ENCODE measurements at regions of chr10 and their contacts with region 1.

Region 1: GRCh38 chr10:44932517-44933450 is 21.6 kb downstream of the TMEM72 start:
- DNase-seq: peak; percentile 84
- ATAC-seq: peak; percentile 97
- H3K4me3 Mint-ChIP-seq: no peak overlapping the region
- H3K27ac Mint-ChIP-seq: no peak overlapping the region
- H3K4me1 Mint-ChIP-seq: no peaks in the 10 kb centered on the region
- H3K27me3 Mint-ChIP-seq: no peaks in the 10 kb centered on the region
- CTCF ChIP-seq: peak; percentile 63

Region 2: DNA sequence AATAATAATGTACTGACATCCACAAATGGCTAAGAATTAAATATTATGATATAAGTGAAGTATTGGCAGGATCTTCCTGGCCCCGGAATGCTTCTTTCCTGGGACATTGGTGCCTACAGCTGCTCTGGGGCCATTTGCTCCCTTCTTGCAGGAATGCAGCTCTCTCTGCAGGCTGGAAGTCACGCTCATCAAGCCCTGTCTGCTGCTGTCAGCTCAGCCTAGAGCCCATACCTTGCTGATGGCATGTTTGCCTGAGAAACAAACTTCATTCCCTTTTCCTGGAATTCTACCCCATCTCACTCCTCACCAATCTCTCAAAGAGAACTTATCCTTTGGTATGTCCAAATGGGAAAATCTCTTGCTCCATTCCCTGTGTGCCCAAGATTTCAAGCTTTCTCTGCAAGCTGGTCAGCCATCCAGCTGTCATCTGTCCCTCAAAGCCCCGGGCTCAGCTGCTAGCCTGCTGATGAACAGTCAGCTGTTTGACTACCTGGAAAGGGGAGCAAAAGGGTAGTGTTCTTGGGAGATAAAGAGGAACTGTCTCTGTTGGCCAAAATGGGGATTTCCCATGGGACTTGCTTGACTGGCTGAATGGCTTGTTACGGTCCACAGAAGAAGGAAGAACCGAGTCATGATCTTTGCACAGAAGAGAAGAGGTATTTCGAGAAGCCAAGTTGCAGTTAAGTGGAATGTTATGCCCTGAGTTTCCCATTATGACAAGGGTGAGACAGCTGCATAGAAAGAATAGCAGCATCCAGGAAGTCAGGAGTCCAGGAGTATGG is 14.8 kb after region 1 on chr10:
- CTCF ChIA-PET with region 1: interaction called, 26 read pairs
- POLR2A ChIA-PET with region 1: interaction called, 4 read pairs
- intact Hi-C with region 1: no loop called
- DNase-seq: peak; percentile 17
- ATAC-seq: peak; percentile 71
- H3K4me3 Mint-ChIP-seq: peak overlapping the region; percentile 26
- H3K27ac Mint-ChIP-seq: no peak overlapping the region
- H3K4me1 Mint-ChIP-seq: peaks cover 45% of the 10 kb centered on the region
- H3K27me3 Mint-ChIP-seq: no peaks in the 10 kb centered on the region
- CTCF ChIP-seq: no peak

Region 3: GRCh38 chr10:44959247-44960087 is 26.7 kb after region 1 on chr10 and contains the start of gene RASSF4:
- CTCF ChIA-PET with region 1: interaction called, 60 read pairs
- POLR2A ChIA-PET with region 1: interaction called, 5 read pairs
- intact Hi-C with region 1: no loop called
- DNase-seq: peak; percentile 90
- ATAC-seq: peak; percentile 99
- H3K4me3 Mint-ChIP-seq: peak within 1 kb of the TSS; percentile 85
- H3K27ac Mint-ChIP-seq: peak within 1 kb of the TSS; percentile 80
- H3K4me1 Mint-ChIP-seq: peaks cover 53% of the 10 kb centered on the region
- H3K27me3 Mint-ChIP-seq: no peaks in the 10 kb centered on the region
- CTCF ChIP-seq: no peak
- total RNA-seq, gene RASSF4: 2.0 and 2.5 TPM in 2 replicates

Region 4: GRCh38 chr10:44965651-44966097 is 32.9 kb after region 1 on chr10:
- CTCF ChIA-PET with region 1: interaction called, 60 read pairs
- POLR2A ChIA-PET with region 1: interaction called, 10 read pairs
- intact Hi-C with region 1: no loop called
- DNase-seq: no peak
- ATAC-seq: peak; percentile 29
- H3K4me3 Mint-ChIP-seq: peak overlapping the region; percentile 42
- H3K27ac Mint-ChIP-seq: peak overlapping the region; percentile 57
- H3K4me1 Mint-ChIP-seq: peaks cover 71% of the 10 kb centered on the region
- H3K27me3 Mint-ChIP-seq: no peaks in the 10 kb centered on the region
- CTCF ChIP-seq: no peak

Region 5: GRCh38 chr10:44974628-44975431 is 42.0 kb after region 1 on chr10:
- CTCF ChIA-PET with region 1: interaction called, 50 read pairs
- POLR2A ChIA-PET with region 1: interaction called, 12 read pairs
- intact Hi-C with region 1: loop called (anchors 1 kb)
- DNase-seq: peak; percentile 81
- ATAC-seq: peak; percentile 90
- H3K4me3 Mint-ChIP-seq: peak overlapping the region; percentile 80
- H3K27ac Mint-ChIP-seq: peak overlapping the region; percentile 75
- H3K4me1 Mint-ChIP-seq: peaks cover 28% of the 10 kb centered on the region
- H3K27me3 Mint-ChIP-seq: no peaks in the 10 kb centered on the region
- CTCF ChIP-seq: no peak

Region 6: DNA sequence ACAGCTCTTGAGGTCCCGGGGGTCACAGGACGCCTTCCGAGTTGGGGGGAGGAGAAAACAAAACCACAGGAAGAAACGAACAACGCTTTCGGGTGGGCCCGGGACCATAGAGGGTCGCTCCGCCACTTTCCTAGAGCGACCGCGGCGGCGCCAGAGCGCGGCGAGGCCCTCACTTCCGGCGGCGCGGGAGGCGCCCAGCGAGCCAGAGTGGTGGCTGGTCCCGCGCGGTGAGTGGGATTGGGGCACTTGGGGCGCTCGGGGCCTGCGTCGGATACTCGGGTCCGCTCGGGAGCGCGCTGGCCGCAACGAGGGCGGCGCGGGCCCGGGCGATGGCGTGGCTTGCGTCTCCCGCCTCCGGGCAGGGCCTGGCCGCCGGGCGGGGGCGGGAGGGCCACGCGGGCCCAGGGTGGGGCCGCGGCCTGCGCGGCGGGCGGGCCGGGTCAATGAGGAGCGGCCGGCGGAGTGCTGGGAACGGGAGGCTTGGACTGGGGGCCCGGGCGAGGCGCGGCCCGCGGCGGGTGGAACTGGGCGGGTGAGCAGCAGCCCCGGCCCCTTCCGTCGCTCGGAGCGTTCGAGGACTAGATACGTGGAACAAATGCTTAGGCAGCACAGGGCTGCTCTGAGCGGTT is 68.1 kb after region 1 on chr10 and contains the start of gene ZNF22:
- CTCF ChIA-PET with region 1: interaction called, 10 read pairs
- POLR2A ChIA-PET with region 1: interaction called, 3 read pairs
- intact Hi-C with region 1: loop called (anchors 2 kb)
- DNase-seq: peak; percentile 76
- ATAC-seq: peak; percentile 82
- H3K4me3 Mint-ChIP-seq: peak within 1 kb of the TSS; percentile 90
- H3K27ac Mint-ChIP-seq: peak within 1 kb of the TSS; percentile 93
- H3K4me1 Mint-ChIP-seq: peaks cover 25% of the 10 kb centered on the region
- H3K27me3 Mint-ChIP-seq: no peaks in the 10 kb centered on the region
- CTCF ChIP-seq: no peak
- total RNA-seq, gene ZNF22: 34.2 and 37.5 TPM in 2 replicates

Region 7: GRCh38 chr10:45235798-45236231 is 303.0 kb after region 1 on chr10:
- CTCF ChIA-PET with region 1: no interaction called
- POLR2A ChIA-PET with region 1: no interaction called
- intact Hi-C with region 1: loop called (anchors 2 kb)
- DNase-seq: no peak
- ATAC-seq: no peak
- H3K4me3 Mint-ChIP-seq: no peak overlapping the region
- H3K27ac Mint-ChIP-seq: no peak overlapping the region
- H3K4me1 Mint-ChIP-seq: no peaks in the 10 kb centered on the region
- H3K27me3 Mint-ChIP-seq: peaks cover 3% of the 10 kb centered on the region
- CTCF ChIP-seq: no peak

Measured in activated B cell treated with CpG ODN at 0.5 μM for 24 hours (primary cell).